ENCODE measurements at regions of chr1 and their contacts with region 1.

Region 1: GRCh38 chr1:117605774-117606648 is at the start of gene TENT5C:
- DNase-seq: peak; percentile 98
- H3K4me3 Mint-ChIP-seq: peak within 1 kb of the TSS; percentile 91
- H3K27ac Mint-ChIP-seq: peak within 1 kb of the TSS; percentile 80
- H3K4me1 Mint-ChIP-seq: peaks cover 56% of the 10 kb centered on the region
- H3K27me3 Mint-ChIP-seq: peaks cover 26% of the 10 kb centered on the region
- total RNA-seq, gene TENT5C: 4.9 and 5.2 TPM in 2 replicates

Region 2: GRCh38 chr1:117367047-117368018 is 238.7 kb before region 1 on chr1 and contains the start of gene MAN1A2:
- intact Hi-C with region 1: loop called (anchors 5 kb)
- DNase-seq: peak; percentile 74
- H3K4me3 Mint-ChIP-seq: peak within 1 kb of the TSS; percentile 97
- H3K27ac Mint-ChIP-seq: peak within 1 kb of the TSS; percentile 88
- H3K4me1 Mint-ChIP-seq: peaks cover 60% of the 10 kb centered on the region
- H3K27me3 Mint-ChIP-seq: no peaks in the 10 kb centered on the region
- total RNA-seq, gene MAN1A2: 30.1 and 32.5 TPM in 2 replicates

Region 3: DNA sequence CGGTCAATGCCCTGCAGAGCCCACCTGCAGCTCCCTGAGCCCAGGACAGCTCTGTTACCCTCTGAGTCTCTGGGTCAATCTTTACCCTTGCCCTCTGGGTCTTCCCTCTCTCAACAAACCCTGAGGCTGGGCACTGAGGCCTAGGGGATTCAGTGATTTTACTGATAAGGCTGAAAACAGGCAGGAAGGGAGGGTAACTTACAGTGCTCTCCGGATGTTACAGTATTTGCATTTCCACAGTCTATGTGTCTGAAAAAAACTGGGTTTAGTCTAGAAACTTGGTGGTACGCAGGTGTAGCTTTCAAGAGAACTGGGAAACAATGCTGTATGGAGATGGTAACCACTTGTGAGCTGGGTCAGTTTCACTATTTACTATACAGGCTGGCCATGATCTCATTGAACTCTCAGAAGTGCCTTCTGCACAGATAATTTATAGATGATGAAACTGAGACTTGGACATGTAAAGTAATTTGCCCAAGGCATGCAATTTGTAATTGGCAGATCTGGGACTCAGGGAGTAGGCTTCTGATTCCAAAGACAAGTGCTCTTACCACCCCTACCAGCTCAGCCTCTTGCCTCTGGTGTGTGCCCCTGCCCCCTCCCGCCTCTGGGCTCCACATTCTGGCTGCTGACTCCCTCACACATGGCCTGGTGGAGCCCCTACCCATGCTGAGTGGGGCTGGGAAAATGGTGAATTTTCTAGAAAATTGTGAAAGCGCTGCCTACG is 48.6 kb after region 1 on chr1:
- intact Hi-C with region 1: loop called (anchors 1 kb)
- DNase-seq: no peak
- H3K4me3 Mint-ChIP-seq: peak overlapping the region; percentile 80
- H3K27ac Mint-ChIP-seq: peak overlapping the region; percentile 87
- H3K4me1 Mint-ChIP-seq: peaks cover 80% of the 10 kb centered on the region
- H3K27me3 Mint-ChIP-seq: peaks cover 13% of the 10 kb centered on the region

Region 4: DNA sequence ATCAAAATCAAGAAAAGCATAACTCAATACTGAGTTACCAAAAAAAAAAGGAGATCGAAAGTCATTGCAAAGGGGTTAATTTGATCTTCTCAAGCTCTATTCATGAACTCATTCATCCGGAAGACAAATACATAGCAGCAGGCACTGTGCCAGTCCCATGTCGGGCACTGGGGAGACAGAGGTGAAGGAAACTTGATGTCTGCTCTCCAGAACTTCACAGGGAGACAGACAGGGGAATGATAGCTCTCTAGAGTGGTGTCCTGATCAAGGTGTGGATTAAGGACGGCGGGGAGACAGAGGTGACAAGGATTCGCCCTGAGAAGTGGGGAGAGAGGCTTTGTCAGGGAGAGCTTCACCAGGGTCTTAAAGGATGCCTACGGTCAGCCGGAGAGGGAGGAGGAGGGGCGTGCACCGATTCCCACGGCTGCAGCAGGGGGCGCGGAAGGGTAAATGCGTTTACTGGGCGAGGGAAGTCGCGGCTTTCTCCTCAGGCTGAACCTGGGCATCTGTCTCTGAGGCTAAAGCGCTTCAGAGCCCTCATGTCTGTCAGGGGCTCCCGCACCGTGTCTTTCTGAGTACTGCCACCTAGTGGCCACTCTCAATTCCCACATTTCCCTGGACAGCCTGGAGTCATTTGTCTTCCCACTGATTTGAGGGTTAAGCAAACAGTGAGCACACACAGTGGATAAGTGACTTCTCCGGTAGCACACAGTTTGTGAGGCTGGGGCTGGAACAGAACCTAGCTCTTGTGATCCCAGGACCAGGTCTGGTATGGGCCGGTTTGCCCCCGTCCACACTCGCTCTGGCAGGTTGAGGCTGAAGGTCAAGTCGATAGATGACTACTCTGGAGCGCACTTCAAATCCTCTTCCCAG is 152.7 kb after region 1 on chr1:
- intact Hi-C with region 1: loop called (anchors 5 kb)
- DNase-seq: peak; percentile 51
- H3K4me3 Mint-ChIP-seq: peak overlapping the region; percentile 68
- H3K27ac Mint-ChIP-seq: no peak overlapping the region
- H3K4me1 Mint-ChIP-seq: peaks cover 13% of the 10 kb centered on the region
- H3K27me3 Mint-ChIP-seq: peaks cover 45% of the 10 kb centered on the region

Region 5: DNA sequence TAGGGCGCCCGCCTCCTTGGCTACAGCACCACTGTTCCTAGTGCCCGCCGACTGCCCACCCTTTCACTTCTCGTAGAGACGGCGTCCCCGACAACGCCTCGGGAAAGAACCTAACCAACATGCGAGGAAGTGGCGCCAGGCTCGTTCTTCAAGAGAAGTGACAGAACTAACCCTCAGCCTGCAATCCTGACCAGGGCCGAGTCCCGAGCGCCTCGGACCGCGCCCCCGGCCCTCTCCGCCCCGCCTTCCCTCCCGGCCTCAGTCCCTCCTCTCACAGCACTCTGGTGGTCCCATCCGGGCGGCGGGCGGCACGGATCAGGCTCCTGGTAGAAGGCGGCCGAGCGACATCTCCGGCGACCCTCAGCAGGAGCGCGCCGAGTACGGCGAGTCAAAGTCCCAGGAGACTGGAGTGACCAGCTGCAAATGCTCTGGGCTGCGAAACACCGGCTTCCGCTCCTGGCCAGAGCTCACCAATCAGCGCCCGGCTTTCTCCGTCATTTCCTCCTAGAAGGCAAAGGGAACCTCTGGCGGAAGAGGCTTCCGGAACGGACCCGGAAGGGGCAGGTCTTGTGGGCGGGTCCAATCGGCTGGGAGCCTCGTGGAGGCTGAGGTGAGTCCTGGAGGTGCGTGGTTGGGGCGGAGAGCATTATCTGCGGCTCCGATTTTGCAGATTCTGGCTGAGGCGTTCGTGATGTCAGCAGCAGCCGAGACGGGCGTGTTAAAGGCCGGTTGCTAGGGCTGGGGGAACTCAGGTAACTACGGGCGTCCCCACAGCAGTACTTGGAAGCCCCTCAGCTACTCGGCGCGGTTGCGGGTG is 323.4 kb after region 1 on chr1 and contains the starts of genes GDAP2 and WDR3:
- intact Hi-C with region 1: loop called (anchors 1 kb)
- DNase-seq: peak; percentile 96
- H3K4me3 Mint-ChIP-seq: peak within 1 kb of the TSS; percentile 96
- H3K27ac Mint-ChIP-seq: peak within 1 kb of the TSS; percentile 89
- H3K4me1 Mint-ChIP-seq: peaks cover 46% of the 10 kb centered on the region
- H3K27me3 Mint-ChIP-seq: no peaks in the 10 kb centered on the region
- total RNA-seq, gene GDAP2: 21.4 and 29.0 TPM in 2 replicates
- total RNA-seq, gene WDR3: 68.3 and 72.8 TPM in 2 replicates